ENCODE measurements at regions of chrX and their contacts with region 1.

Region 1: GRCh38 chrX:145881175-145881867 is 63.7 kb downstream of the SLITRK2 start:
- DNase-seq: no peak
- H3K4me3 ChIP-seq: no peak overlapping the region
- H3K27ac ChIP-seq: no peak overlapping the region
- H3K4me1 ChIP-seq: no peaks in the 10 kb centered on the region
- H3K27me3 ChIP-seq: no peaks in the 10 kb centered on the region
- CTCF ChIP-seq: no peak
- EP300 ChIP-seq: no peak
- POLR2A ChIP-seq: no peak

Region 2: GRCh38 chrX:145623453-145623852 is 257.9 kb before region 1 on chrX:
- in situ Hi-C with region 1: no loop called
- intact Hi-C with region 1: no loop called
- DNase-seq: no peak
- H3K4me3 ChIP-seq: no peak overlapping the region
- H3K27ac ChIP-seq: no peak overlapping the region
- H3K4me1 ChIP-seq: no peaks in the 10 kb centered on the region
- H3K27me3 ChIP-seq: no peaks in the 10 kb centered on the region
- CTCF ChIP-seq: no peak
- EP300 ChIP-seq: no peak
- POLR2A ChIP-seq: no peak

Region 3: DNA sequence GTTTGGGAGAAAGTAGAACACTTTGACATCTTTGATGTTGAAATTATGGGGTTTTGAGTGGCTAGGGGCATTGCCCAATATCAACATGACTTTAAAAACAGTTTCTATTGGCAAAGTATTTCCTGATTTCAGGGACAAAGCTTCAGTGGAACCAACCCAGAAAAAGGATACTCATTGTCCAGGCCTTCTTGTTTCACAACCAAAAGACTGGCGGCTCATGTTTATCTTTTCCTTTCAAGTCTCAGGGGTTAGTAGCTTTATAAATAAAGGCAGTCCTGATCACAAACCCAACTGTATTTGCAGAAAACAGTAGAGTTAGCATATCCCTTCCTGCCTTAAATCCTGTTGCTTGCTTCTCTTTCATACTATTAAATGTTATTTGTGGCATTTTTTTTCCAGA is 55.4 kb after region 1 on chrX:
- in situ Hi-C with region 1: no loop called
- intact Hi-C with region 1: loop called (anchors 10 kb)
- DNase-seq: no peak
- H3K4me3 ChIP-seq: no peak overlapping the region
- H3K27ac ChIP-seq: no peak overlapping the region
- H3K4me1 ChIP-seq: no peaks in the 10 kb centered on the region
- H3K27me3 ChIP-seq: no peaks in the 10 kb centered on the region
- CTCF ChIP-seq: no peak
- EP300 ChIP-seq: no peak
- POLR2A ChIP-seq: no peak